ENCODE measurements at regions of chr3 and their contacts with region 1.

Region 1: DNA sequence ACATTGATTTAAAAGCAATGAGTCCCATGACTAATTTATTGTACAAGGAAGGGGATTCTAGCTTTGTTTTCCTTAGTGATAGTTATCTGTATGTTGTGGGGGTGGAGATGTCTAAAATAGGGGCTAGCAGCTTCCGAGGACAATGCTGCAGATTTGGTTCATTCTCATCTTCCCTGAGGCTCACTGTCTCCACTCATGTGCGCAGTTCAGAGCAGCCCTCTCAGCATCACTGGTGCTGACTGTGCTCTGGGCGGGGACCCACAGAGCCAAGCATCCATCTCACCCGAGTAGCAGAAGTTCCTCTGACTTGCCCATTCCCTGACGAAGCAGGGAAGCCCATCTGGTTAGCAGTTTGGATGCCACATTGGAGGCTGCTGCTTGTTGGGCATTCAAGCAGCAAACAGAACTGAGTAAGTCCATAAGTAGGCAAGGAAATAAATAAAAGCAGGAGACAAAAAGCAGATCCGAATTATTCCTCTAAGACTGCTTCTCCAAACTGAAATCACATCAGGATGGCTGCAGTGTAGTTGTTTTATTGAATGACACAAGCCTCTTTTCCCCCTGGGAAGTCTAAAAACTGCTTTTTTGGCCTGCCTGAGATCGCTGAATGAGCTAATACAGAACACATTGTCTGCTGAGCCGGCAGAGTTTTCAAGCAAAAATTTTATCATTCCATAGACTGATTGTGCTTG is 27.5 kb downstream of the RARB start:
- DNase-seq: peak; percentile 69
- H3K4me3 ChIP-seq: no peak overlapping the region
- H3K27ac ChIP-seq: peak overlapping the region; percentile 77
- H3K4me1 ChIP-seq: peaks cover 70% of the 10 kb centered on the region
- H3K27me3 ChIP-seq: no peaks in the 10 kb centered on the region
- CTCF ChIP-seq: no peak
- POLR2A ChIP-seq: no peak

Region 2: DNA sequence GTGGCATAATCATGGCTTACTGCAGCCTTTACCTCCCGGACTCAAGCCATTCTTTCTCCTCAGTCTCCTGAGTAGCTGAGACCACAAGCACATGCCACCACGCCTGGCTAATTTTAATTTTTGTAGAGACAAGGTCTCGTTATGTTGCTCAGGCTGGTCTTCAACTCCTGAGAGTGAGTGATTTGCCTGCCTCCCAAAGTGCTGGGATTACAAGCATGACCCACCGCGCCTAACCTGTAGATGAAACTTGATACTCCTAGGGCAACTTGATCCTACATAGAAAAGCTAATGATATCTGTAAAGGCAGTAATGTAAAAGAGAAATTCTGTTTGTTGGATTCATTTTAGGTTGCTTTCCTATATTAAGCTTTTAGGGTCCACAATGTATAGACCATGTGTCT is 569.1 kb before region 1 on chr3:
- CTCF ChIA-PET with region 1: no interaction called
- POLR2A ChIA-PET with region 1: no interaction called
- dilution Hi-C with region 1: no loop called
- intact Hi-C with region 1: no loop called
- DNase-seq: no peak
- H3K4me3 ChIP-seq: no peak overlapping the region
- H3K27ac ChIP-seq: no peak overlapping the region
- H3K4me1 ChIP-seq: no peaks in the 10 kb centered on the region
- H3K27me3 ChIP-seq: no peaks in the 10 kb centered on the region
- CTCF ChIP-seq: no peak
- POLR2A ChIP-seq: no peak

Region 3: DNA sequence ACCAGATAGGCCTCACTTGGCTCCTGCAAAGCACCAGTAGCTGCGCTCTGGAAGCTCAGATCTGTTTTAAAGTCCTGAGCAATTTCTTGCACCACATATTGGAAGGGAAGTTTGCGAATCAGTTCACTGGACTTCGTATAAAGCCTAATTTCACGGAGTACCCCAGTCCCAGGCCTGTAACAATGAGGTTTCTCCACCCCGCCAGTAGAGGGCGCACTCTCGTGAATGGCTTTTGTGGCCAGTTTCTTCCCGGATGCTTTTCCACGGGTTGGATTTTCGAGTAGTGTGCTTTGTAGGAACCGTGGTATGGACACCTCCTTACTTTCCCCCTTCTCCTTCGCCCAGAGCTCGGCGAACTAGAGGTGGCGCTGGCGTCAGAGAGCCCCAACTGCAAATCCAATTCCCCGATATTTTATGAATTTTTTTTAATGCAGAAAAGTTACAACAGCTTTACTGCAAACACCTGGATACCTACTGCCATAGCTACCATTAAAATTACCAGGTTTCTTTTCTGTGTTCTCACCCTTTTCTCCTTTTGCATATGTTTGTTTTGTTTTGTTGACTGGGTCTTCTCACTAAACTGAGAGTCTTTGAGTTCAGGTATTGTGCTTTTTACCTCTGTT is 14.2 kb before region 1 on chr3:
- CTCF ChIA-PET with region 1: interaction called, 20 read pairs
- POLR2A ChIA-PET with region 1: no interaction called
- dilution Hi-C with region 1: no loop called
- intact Hi-C with region 1: no loop called
- DNase-seq: no peak
- H3K4me3 ChIP-seq: no peak overlapping the region
- H3K27ac ChIP-seq: no peak overlapping the region
- H3K4me1 ChIP-seq: peaks cover 10% of the 10 kb centered on the region
- H3K27me3 ChIP-seq: no peaks in the 10 kb centered on the region
- CTCF ChIP-seq: peak; percentile 60 to 69
- POLR2A ChIP-seq: no peak

Region 4: DNA sequence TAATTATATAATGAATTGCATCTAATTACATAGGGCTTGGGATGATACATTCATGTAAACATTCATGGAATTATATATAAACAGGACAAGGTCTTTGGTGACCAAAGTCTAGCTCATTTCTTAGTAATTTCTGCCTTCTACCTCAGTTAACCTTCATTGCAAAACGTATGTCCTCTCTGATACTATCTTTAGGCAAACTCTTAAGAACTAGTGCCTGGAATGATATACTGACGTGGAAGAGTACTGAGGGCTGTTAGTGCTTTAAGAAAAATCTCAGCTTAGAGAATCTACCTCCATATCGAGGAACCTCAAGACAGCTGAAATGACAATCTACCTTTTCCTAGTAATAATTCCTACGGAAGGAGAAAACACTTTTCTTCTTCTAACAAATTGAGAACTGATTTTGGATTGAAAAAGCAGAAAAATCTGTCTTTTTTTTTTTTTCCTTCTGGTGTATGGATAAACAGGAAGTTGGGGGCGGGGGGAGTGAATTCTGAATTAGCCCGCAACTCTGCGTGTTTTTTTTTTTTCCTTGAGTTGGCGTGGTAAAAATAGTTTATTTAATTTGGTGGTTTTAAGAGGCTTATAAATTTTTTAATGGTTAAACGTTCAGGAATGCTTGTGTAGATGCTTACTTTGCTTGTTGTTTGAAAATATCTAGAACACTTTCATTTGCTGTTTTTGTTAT is 15.6 kb after region 1 on chr3:
- CTCF ChIA-PET with region 1: interaction called, 3 read pairs
- POLR2A ChIA-PET with region 1: no interaction called
- dilution Hi-C with region 1: no loop called
- intact Hi-C with region 1: loop called (anchors 1 kb)
- DNase-seq: peak; percentile 46
- H3K4me3 ChIP-seq: no peak overlapping the region
- H3K27ac ChIP-seq: no peak overlapping the region
- H3K4me1 ChIP-seq: peaks cover 5% of the 10 kb centered on the region
- H3K27me3 ChIP-seq: no peaks in the 10 kb centered on the region
- CTCF ChIP-seq: no peak
- POLR2A ChIP-seq: no peak

Region 5: DNA sequence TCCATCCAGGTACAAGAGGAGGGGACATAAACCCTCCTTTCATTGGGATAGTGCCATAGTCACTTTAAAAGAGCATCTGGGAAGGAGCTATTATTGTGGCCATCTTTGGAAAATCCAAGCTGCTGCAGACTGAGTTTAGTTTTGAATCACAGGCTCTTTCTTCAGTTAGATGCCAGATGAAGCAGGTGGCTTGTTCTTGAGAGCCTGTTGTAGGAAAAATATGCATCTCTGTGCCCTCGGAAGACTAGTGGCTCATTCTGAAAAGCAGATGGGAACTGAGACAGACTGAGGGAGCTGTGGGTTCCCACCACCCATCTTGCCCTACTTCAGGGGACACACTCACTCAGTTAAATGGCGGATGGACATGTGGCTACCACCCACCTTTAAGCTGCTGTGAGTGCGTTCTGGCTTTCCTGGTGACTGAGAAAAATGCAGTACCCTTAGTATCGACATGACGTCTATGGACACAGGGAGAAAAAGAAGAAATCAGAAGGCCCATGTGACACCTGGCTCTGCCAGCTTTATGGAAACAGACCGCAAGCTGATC is 22.7 kb after region 1 on chr3:
- CTCF ChIA-PET with region 1: interaction called, 6 read pairs
- POLR2A ChIA-PET with region 1: no interaction called
- dilution Hi-C with region 1: no loop called
- intact Hi-C with region 1: loop called (anchors 1 kb)
- DNase-seq: no peak
- H3K4me3 ChIP-seq: no peak overlapping the region
- H3K27ac ChIP-seq: no peak overlapping the region
- H3K4me1 ChIP-seq: peaks cover 44% of the 10 kb centered on the region
- H3K27me3 ChIP-seq: no peaks in the 10 kb centered on the region
- CTCF ChIP-seq: no peak
- POLR2A ChIP-seq: no peak

Region 6: GRCh38 chr3:25483456-25483855 is 27.9 kb after region 1 on chr3:
- CTCF ChIA-PET with region 1: interaction called, 6 read pairs
- POLR2A ChIA-PET with region 1: no interaction called
- dilution Hi-C with region 1: no loop called
- intact Hi-C with region 1: loop called (anchors 1 kb)
- DNase-seq: peak; percentile 90
- H3K4me3 ChIP-seq: no peak overlapping the region
- H3K27ac ChIP-seq: peak overlapping the region; percentile 55
- H3K4me1 ChIP-seq: peaks cover 48% of the 10 kb centered on the region
- H3K27me3 ChIP-seq: no peaks in the 10 kb centered on the region
- CTCF ChIP-seq: no peak
- POLR2A ChIP-seq: no peak

Region 7: GRCh38 chr3:25493786-25494185 is 38.2 kb after region 1 on chr3:
- CTCF ChIA-PET with region 1: no interaction called
- POLR2A ChIA-PET with region 1: no interaction called
- dilution Hi-C with region 1: no loop called
- intact Hi-C with region 1: loop called (anchors 2 kb)
- DNase-seq: peak; percentile 75
- H3K4me3 ChIP-seq: no peak overlapping the region
- H3K27ac ChIP-seq: peak overlapping the region; percentile 83
- H3K4me1 ChIP-seq: peaks cover 24% of the 10 kb centered on the region
- H3K27me3 ChIP-seq: no peaks in the 10 kb centered on the region
- CTCF ChIP-seq: no peak
- POLR2A ChIP-seq: no peak

Region 8: GRCh38 chr3:25508901-25509300 is 53.3 kb after region 1 on chr3:
- CTCF ChIA-PET with region 1: interaction called, 4 read pairs
- POLR2A ChIA-PET with region 1: no interaction called
- dilution Hi-C with region 1: no loop called
- intact Hi-C with region 1: loop called (anchors 1 kb)
- DNase-seq: peak; percentile 94
- H3K4me3 ChIP-seq: no peak overlapping the region
- H3K27ac ChIP-seq: peak overlapping the region; percentile 98
- H3K4me1 ChIP-seq: peaks cover 28% of the 10 kb centered on the region
- H3K27me3 ChIP-seq: no peaks in the 10 kb centered on the region
- CTCF ChIP-seq: no peak
- POLR2A ChIP-seq: no peak

Region 9: DNA sequence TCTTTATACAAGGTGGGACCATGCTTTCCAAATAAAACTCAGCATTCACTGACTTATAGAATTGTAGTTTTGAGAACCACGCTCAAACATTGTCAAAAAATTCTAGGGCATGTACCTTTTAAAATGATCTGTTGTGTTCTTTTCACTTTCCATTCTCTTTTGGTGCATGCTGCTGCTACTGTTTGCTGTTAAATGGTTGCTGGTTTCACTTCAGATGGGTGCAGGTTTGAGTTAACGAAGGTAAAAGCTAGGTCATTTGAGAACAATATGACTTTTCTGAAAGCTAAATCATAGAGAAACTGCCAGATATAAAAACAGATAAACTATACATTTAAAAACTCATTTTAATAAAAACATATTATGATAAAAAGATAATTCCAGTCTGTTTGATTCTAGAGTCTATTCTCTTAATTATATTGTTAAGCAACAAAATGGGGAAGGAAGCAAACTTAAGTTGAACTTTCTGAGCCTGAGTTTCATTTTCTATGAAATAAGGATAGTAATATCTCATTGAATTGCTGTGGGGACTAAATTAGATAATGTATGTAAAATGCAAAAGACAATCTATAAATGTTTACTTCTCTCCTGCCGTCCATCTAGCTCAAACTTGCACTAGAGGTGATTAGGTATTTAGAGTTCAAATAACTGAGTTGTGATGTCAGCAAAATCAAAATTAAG is 416.8 kb after region 1 on chr3:
- CTCF ChIA-PET with region 1: no interaction called
- POLR2A ChIA-PET with region 1: no interaction called
- dilution Hi-C with region 1: no loop called
- intact Hi-C with region 1: no loop called
- DNase-seq: no peak
- H3K4me3 ChIP-seq: no peak overlapping the region
- H3K27ac ChIP-seq: no peak overlapping the region
- H3K4me1 ChIP-seq: no peaks in the 10 kb centered on the region
- H3K27me3 ChIP-seq: no peaks in the 10 kb centered on the region
- CTCF ChIP-seq: no peak
- POLR2A ChIP-seq: no peak

Measured in endothelial cell of umbilical vein (primary cell).